Naive thymus-derived CD4-positive, alpha-beta T cell (primary cell): ENCODE measurements at regions of chr2 and their contacts with region 1.

Region 1: GRCh38 chr2:165698444-165698894 is 95.6 kb downstream of the GALNT3 start:
- DNase-seq: peak in 4 of 9 donors; percentile 2 to 25 (median 10)
- ATAC-seq: no peak
- H3K4me3 ChIP-seq: no peak overlapping the region
- H3K4me3 Mint-ChIP-seq: no peak overlapping the region
- H3K27ac ChIP-seq: no peak overlapping the region
- H3K27ac Mint-ChIP-seq: no peak overlapping the region
- H3K4me1 ChIP-seq: no peaks in the 10 kb centered on the region
- H3K4me1 Mint-ChIP-seq: no peaks in the 10 kb centered on the region
- H3K27me3 ChIP-seq: no peaks in the 10 kb centered on the region
- H3K27me3 Mint-ChIP-seq: peaks cover 0 to 24% (median 11%) of the 10 kb centered on the region in 5 donors

Region 2: DNA sequence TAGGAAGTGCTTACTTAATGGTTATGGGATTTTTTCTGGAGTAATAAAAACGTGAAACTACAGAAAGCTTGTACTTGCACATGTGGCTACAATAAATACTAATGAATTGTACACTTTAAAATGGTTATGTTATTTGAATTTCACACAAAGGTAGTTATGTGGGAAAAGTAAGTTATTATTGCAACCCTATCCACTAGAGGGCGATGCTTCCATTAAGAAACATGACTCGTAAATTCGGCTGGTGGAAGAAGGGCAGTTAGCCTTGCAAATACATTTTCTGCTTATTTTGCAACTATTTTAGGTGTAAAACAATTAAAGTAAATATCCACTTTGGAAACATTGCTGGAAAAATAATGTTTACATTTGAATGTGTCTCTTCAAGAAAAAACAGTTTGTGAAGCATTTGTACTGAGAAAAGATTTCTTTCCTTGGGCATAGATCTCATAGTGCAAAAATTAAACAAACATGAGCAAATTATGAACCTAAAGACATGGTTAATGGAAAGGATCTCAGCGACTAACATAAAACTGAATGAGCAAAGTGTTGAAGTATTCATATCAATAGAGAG is 297.1 kb before region 1 on chr2:
- CTCF ChIA-PET with region 1: no interaction called
- POLR2A ChIA-PET with region 1: no interaction called
- intact Hi-C with region 1: loop called (anchors 1 to 10 kb)
- DNase-seq: peak in 7 of 9 donors; percentile 8 to 56 (median 39)
- ATAC-seq: peak; percentile 60
- H3K4me3 ChIP-seq: no peak overlapping the region
- H3K4me3 Mint-ChIP-seq: no peak overlapping the region
- H3K27ac ChIP-seq: no peak overlapping the region
- H3K27ac Mint-ChIP-seq: no peak overlapping the region
- H3K4me1 ChIP-seq: no peaks in the 10 kb centered on the region
- H3K4me1 Mint-ChIP-seq: peaks cover 0 to 3% (median 0%) of the 10 kb centered on the region in 7 donors
- H3K27me3 ChIP-seq: no peaks in the 10 kb centered on the region
- H3K27me3 Mint-ChIP-seq: peaks cover 14 to 35% (median 26%) of the 10 kb centered on the region in 5 donors